ENCODE measurements at regions of chr7 and their contacts with region 1.

Region 1: DNA sequence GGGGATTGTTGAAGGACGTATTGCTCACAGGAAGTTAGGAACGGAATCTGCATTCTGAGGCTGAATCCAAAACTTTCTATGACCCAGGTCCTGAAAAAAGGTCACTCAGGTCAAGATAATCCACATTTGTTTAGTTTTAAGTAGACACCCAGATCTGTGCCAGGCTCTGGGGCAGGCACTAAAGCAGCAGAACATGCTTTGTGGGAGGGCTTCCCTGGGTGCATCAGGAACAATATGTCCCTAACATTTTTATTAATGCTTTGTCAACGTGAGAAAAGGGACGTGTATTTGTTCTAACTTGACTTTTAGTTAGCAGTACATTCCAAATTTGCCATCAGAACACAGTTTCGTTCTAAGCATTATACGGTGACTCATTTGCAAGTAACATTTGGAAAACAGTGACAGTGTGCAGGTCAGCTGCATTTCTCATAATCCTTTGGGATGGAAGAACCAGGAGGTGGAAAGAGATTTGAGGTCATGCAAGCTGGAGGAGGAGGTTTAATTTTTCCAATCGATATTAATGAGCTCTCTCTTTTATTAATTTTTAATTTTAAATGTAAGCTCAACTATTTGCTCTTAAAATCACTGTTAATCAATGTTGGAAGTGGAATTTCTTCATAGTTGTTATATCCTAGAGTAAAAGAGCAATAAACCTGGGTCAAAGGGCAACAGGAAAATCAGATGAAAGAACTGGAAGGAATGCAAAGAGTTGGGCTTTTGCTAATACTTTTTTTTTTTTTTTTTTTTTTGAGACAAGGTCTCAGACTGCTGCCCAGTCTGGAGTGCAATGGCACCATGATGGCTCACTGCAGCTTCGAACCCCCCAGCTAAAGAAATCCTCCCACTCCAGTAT is 35.0 kb downstream of the TAS2R41 start:
- DNase-seq: peak in 1 of 2 experiments; percentile 61
- H3K4me3 ChIP-seq: no peak overlapping the region
- H3K4me3 Mint-ChIP-seq: peak overlapping the region; percentile 36
- H3K27ac Mint-ChIP-seq: peak overlapping the region; percentile 17
- H3K4me1 ChIP-seq: peaks cover 38% of the 10 kb centered on the region
- H3K4me1 Mint-ChIP-seq: peaks cover 26% of the 10 kb centered on the region
- H3K27me3 ChIP-seq: no peaks in the 10 kb centered on the region
- H3K27me3 Mint-ChIP-seq: no peaks in the 10 kb centered on the region
- CTCF ChIP-seq: no peak

Region 2: GRCh38 chr7:143416565-143417149 is 96.1 kb before region 1 on chr7:
- CTCF ChIA-PET with region 1: no interaction called
- POLR2A ChIA-PET with region 1: interaction called, 11 read pairs
- intact Hi-C with region 1: no loop called
- DNase-seq: peak in 1 of 2 experiments; percentile 66
- H3K4me3 ChIP-seq: no peak overlapping the region
- H3K4me3 Mint-ChIP-seq: no peak overlapping the region
- H3K27ac Mint-ChIP-seq: no peak overlapping the region
- H3K4me1 ChIP-seq: peaks cover 17% of the 10 kb centered on the region
- H3K4me1 Mint-ChIP-seq: peaks cover 35% of the 10 kb centered on the region
- H3K27me3 ChIP-seq: no peaks in the 10 kb centered on the region
- H3K27me3 Mint-ChIP-seq: no peaks in the 10 kb centered on the region
- CTCF ChIP-seq: peak; percentile 70 to 75

Region 3: DNA sequence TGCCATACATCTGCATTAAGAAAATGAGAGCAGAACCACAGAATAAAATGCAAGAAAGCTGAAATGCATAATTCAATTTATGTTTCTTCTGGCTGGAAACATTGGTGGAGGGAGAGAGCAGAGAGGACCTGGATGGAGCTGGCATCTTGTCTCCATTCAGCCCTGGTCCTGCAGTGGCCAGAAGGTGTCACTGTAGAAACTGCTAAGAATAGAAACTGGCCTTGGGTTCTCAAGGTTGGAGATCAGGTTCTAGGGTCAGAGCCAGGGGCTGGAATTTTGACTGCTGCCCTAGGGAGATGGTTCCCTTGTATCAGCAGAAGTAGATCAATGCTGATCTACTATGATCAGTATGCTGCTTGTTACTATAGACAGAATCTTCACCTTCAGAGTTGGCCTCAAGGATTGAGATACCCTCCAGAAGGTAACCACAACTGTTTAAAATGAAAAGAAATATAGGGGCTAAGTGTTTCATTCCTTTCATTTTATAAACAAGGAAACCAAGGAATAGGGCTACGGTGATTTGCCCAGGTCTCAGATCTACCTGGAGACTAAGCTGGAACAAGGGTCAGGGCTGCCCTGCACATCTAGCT is 21.9 kb before region 1 on chr7:
- CTCF ChIA-PET with region 1: interaction called, 12 read pairs
- POLR2A ChIA-PET with region 1: no interaction called
- intact Hi-C with region 1: no loop called
- DNase-seq: peak; percentile 68 to 69
- H3K4me3 ChIP-seq: no peak overlapping the region
- H3K4me3 Mint-ChIP-seq: no peak overlapping the region
- H3K27ac Mint-ChIP-seq: no peak overlapping the region
- H3K4me1 ChIP-seq: peaks cover 17% of the 10 kb centered on the region
- H3K4me1 Mint-ChIP-seq: peaks cover 18% of the 10 kb centered on the region
- H3K27me3 ChIP-seq: no peaks in the 10 kb centered on the region
- H3K27me3 Mint-ChIP-seq: no peaks in the 10 kb centered on the region
- CTCF ChIP-seq: peak; percentile 77 to 91